ENCODE measurements at regions of chr5 and their contacts with region 1.

Region 1: DNA sequence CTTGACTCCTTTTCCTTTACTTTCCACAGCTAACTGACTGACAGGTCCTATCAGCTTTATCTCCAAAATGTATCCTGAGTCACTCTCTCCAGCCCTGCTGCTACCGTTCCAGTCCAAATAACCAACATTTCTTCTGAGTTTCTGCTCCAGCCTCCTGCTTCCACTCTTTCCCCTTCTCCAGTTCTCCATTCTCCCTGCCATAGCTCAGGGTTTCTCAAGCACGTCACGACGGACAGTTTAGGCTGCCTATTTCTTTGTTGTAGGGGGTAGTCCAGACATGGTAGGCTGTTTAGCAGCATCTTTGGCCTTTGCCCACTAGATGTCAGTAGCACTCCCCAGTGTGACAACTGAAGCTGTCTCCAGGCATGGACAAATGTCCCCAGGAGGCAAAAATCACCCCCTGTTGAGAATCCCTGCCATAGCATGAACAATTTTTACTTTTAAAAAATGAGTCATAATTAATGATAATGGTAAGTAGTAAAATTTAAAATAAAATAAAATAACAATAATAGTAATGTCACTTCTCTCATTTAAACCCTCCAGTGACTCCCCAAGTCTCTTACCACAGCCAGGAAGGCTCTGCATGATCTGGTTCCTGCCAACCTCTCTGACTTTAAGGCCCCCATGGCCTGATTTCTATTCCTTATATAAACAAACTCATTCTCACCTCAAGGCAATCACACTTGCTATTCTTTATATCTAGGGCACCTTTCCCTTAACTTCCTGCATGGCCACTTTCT is 105.4 kb upstream of the FER start:
- DNase-seq: peak; percentile 20
- ATAC-seq: peak; percentile 77
- H3K4me3 Mint-ChIP-seq: no peak overlapping the region
- H3K27ac Mint-ChIP-seq: no peak overlapping the region
- H3K4me1 Mint-ChIP-seq: peaks cover 2% of the 10 kb centered on the region
- H3K27me3 Mint-ChIP-seq: peaks cover 5% of the 10 kb centered on the region
- CTCF ChIP-seq: peak; percentile 70

Region 2: DNA sequence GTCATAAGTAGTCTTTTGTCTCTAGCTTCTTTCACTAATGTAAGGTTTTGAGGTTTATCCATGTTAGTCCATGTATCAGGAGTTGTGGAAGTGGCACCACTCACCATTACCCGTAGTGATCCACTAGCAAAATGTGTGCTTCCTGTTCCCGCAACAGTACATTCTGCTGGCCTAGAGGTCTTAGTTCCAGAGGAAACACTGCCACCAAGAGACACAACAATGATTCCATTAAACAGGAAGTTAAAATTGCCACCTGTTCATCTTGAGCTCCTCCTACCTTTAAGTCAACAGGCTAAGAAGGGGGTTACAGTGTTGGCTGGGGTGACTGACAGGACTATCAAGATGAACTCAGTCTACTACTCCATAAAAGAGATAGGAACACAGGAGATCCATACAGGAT is 410.9 kb before region 1 on chr5:
- CTCF ChIA-PET with region 1: no interaction called
- POLR2A ChIA-PET with region 1: no interaction called
- intact Hi-C with region 1: no loop called
- DNase-seq: no peak
- ATAC-seq: no peak
- H3K4me3 Mint-ChIP-seq: no peak overlapping the region
- H3K27ac Mint-ChIP-seq: no peak overlapping the region
- H3K4me1 Mint-ChIP-seq: no peaks in the 10 kb centered on the region
- H3K27me3 Mint-ChIP-seq: no peaks in the 10 kb centered on the region
- CTCF ChIP-seq: no peak

Region 3: GRCh38 chr5:108260117-108260857 is 382.1 kb before region 1 on chr5:
- CTCF ChIA-PET with region 1: interaction called, 4 read pairs
- POLR2A ChIA-PET with region 1: no interaction called
- intact Hi-C with region 1: loop called (anchors 1 kb)
- DNase-seq: no peak
- ATAC-seq: peak; percentile 75
- H3K4me3 Mint-ChIP-seq: peak overlapping the region; percentile 64
- H3K27ac Mint-ChIP-seq: peak overlapping the region; percentile 56
- H3K4me1 Mint-ChIP-seq: peaks cover 7% of the 10 kb centered on the region
- H3K27me3 Mint-ChIP-seq: no peaks in the 10 kb centered on the region
- CTCF ChIP-seq: peak; percentile 64

Region 4: GRCh38 chr5:109439590-109439989 is 797.3 kb after region 1 on chr5:
- CTCF ChIA-PET with region 1: interaction called, 3 read pairs
- POLR2A ChIA-PET with region 1: no interaction called
- intact Hi-C with region 1: loop called (anchors 1 kb)
- DNase-seq: no peak
- ATAC-seq: no peak
- H3K4me3 Mint-ChIP-seq: no peak overlapping the region
- H3K27ac Mint-ChIP-seq: no peak overlapping the region
- H3K4me1 Mint-ChIP-seq: no peaks in the 10 kb centered on the region
- H3K27me3 Mint-ChIP-seq: no peaks in the 10 kb centered on the region
- CTCF ChIP-seq: no peak

Region 5: DNA sequence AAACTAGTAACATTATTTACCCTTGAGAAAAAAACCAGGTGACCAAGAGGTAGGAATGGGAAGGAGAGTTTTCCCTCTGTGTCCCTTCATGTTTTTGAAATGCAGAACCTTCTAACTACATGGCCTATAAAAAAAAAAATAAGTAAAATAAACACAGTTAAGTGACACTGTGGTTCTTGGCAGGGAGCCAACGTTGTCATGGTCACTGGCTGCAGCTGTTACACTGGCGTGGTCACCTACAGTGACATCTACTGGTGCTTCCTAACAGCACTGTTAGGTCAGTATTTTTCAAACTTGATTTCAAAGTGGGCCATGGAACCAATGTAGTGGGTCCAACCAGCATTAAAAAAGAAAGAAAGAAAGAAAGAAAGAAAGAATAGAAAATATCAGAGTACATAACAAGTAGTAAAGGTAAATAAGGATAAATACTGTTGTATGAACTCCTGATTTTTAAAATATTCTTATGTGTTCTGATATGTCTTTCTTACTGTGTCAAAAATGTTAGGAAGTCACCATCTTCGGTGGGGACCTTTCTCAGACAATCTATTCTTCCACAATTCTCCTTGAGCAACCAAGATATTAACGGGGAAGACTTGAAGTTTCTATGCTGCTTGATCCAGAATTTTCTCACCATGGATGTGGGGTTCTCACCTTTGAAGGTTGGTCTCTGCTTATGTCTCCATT is 826.5 kb after region 1 on chr5:
- CTCF ChIA-PET with region 1: interaction called, 3 read pairs
- POLR2A ChIA-PET with region 1: no interaction called
- intact Hi-C with region 1: loop called (anchors 2 kb)
- DNase-seq: peak; percentile 55
- ATAC-seq: peak; percentile 93
- H3K4me3 Mint-ChIP-seq: no peak overlapping the region
- H3K27ac Mint-ChIP-seq: no peak overlapping the region
- H3K4me1 Mint-ChIP-seq: peaks cover 6% of the 10 kb centered on the region
- H3K27me3 Mint-ChIP-seq: no peaks in the 10 kb centered on the region
- CTCF ChIP-seq: no peak

Region 6: GRCh38 chr5:109479260-109479860 is 837.0 kb after region 1 on chr5:
- CTCF ChIA-PET with region 1: interaction called, 6 read pairs
- POLR2A ChIA-PET with region 1: no interaction called
- intact Hi-C with region 1: loop called (anchors 1 kb)
- DNase-seq: no peak
- ATAC-seq: no peak
- H3K4me3 Mint-ChIP-seq: no peak overlapping the region
- H3K27ac Mint-ChIP-seq: no peak overlapping the region
- H3K4me1 Mint-ChIP-seq: peaks cover 7% of the 10 kb centered on the region
- H3K27me3 Mint-ChIP-seq: peaks cover 6% of the 10 kb centered on the region
- CTCF ChIP-seq: no peak

Region 7: DNA sequence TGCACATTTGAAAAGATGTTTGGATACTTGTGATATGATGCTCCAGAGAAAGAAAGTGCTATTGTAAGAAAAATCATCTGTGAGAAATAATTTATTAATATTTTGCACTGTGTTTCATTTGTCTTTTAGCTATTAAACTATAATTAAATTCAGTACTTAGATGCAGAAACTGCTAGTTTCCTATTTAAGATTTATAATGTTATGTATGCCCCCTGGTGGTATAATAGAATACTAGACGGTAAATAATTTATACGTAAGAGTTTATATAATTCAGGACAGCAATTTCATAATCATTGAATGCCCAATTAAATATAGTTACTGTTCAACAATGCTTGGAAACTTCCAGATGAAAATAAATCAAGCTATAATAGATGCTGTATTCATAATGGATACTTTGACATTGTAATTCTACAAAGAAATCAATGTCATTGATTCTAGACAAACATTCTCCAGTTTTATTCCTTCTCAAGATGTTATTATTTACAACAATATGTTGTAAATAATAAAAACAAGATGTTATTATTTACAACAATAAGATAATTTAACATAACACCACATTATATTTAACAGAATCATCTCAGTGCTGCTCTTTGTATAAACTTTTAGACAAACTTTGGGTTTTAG is 1983.2 kb after region 1 on chr5:
- CTCF ChIA-PET with region 1: interaction called, 3 read pairs
- POLR2A ChIA-PET with region 1: no interaction called
- intact Hi-C with region 1: loop called (anchors 1 kb)
- DNase-seq: no peak
- ATAC-seq: no peak
- H3K4me3 Mint-ChIP-seq: no peak overlapping the region
- H3K27ac Mint-ChIP-seq: no peak overlapping the region
- H3K4me1 Mint-ChIP-seq: no peaks in the 10 kb centered on the region
- H3K27me3 Mint-ChIP-seq: no peaks in the 10 kb centered on the region
- CTCF ChIP-seq: peak; percentile 77

Measured in activated B cell treated with CpG ODN at 0.5 μM for 24 hours (primary cell).